Right ventricle myocardium inferior (tissue), 1 donor: ENCODE measurements at regions of chr16 and their contacts with region 1.

Region 1: GRCh38 chr16:7332611-7333010 is at the start of gene RBFOX1:
- DNase-seq: no peak
- ATAC-seq: peak; percentile 45
- total RNA-seq, gene RBFOX1: 68.4 TPM

Region 2: GRCh38 chr16:7363422-7364417 is 31.1 kb after region 1 on chr16:
- intact Hi-C with region 1: loop called (anchors 2 kb)
- DNase-seq: no peak
- ATAC-seq: peak; percentile 47

Region 3: GRCh38 chr16:7456211-7456610 is 123.6 kb after region 1 on chr16:
- intact Hi-C with region 1: no loop called
- DNase-seq: no peak
- ATAC-seq: no peak